Right cardiac atrium (tissue), 5 donors: ENCODE measurements at regions of chr1 and their contacts with region 1.

Region 1: DNA sequence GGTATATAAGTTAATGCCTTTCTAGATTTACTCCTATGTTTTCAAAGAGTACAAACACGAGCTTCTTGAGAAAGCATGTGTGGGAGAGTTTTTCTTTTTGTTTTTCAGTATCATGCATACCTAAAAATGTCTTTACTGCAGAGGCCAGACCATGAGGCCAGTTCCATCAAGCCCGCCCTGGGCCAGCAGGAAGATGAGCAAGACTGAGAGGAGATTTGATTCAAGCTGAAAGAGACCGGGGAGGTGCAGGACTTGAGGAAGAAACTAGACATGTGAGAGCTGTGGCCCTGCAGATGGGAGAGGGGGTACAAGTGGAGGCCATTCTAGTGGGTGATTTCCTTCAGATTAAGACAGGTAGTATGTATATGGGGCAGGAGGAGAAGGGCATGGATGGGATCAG is 33.4 kb upstream of the NTPCR start:
- DNase-seq: no peak
- ATAC-seq: no peak
- H3K4me3 ChIP-seq: no peak overlapping the region
- H3K27ac ChIP-seq: no peak overlapping the region
- H3K4me1 ChIP-seq: no peaks in the 10 kb centered on the region
- H3K27me3 ChIP-seq: no peaks in the 10 kb centered on the region

Region 2: DNA sequence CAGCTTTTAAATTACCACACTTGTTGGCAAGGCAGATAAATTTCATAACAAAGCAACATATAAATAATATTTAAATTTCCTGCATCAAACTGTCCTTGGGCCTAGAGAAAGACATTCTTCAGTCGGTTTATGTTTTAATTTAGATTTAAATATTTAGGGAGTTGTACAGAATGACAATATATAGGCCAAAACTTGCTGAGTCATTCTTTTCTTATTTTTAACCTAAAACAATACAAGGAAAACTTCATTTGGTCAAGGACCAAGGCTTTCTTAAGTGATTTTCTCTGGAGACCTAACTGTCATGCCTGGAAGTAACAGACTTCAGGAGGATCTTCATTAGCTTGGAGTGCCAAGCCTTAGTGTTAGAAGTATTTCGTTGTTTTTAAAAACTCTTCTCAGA is 106.2 kb before region 1 on chr1:
- intact Hi-C with region 1: loop called in 1 of 4 experiments (anchors 10 kb)
- DNase-seq: no peak
- ATAC-seq: no peak
- H3K4me3 ChIP-seq: no peak overlapping the region
- H3K27ac ChIP-seq: no peak overlapping the region
- H3K4me1 ChIP-seq: no peaks in the 10 kb centered on the region
- H3K27me3 ChIP-seq: no peaks in the 10 kb centered on the region

Region 3: DNA sequence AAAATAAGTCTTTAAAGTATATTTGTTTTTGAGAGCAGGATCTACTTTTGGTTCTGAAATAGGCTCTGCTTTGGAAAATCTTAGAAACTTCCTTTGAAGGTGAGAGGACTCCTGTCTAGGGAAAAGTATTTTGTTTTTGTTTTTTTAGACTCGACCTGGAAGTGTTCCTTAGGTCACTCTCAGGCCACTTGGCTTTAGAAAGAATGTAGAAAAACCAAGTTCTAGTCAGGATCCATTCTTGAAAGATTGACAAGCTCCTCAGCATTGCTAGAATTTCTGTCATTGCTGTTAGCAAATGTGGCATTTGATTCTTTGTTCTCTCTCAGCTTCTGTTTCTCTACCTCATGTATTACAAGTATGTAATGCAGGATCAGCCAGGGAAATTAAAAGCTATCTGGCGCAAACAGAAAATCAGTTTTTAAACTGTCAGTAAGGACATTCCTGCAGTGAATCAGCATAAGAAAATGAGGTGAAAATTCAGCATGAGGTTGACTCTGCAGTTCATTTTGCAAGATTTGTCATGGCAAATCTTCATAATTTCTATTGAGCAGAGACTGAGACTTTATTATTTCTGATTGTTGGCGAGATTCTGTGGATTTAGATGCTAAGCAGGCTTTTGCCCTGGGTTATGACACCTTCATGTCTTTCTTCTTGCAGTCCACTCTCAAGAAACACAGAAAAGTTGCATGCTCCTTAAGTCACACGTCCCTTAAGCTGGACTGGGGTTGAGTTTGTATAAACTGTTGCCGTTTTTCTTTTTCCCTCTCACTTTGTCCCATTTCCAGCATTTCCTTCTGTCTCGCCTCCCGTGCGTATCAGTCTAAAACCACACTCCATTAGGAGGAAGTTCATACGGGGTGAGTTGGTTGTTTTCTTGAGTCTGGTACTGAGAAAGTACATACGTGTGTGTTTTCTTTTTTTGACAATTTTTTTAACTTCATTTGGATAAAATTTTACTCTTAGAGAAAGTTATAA is 46.0 kb after region 1 on chr1:
- intact Hi-C with region 1: no loop called
- DNase-seq: no peak
- ATAC-seq: peak in 1 of 2 donors; percentile 54
- H3K4me3 ChIP-seq: peak overlapping the region; percentile 31
- H3K27ac ChIP-seq: peak overlapping the region; percentile 51
- H3K4me1 ChIP-seq: peaks cover 5% of the 10 kb centered on the region
- H3K27me3 ChIP-seq: no peaks in the 10 kb centered on the region